ENCODE measurements at regions of chr13 and their contacts with region 1.

Region 1: DNA sequence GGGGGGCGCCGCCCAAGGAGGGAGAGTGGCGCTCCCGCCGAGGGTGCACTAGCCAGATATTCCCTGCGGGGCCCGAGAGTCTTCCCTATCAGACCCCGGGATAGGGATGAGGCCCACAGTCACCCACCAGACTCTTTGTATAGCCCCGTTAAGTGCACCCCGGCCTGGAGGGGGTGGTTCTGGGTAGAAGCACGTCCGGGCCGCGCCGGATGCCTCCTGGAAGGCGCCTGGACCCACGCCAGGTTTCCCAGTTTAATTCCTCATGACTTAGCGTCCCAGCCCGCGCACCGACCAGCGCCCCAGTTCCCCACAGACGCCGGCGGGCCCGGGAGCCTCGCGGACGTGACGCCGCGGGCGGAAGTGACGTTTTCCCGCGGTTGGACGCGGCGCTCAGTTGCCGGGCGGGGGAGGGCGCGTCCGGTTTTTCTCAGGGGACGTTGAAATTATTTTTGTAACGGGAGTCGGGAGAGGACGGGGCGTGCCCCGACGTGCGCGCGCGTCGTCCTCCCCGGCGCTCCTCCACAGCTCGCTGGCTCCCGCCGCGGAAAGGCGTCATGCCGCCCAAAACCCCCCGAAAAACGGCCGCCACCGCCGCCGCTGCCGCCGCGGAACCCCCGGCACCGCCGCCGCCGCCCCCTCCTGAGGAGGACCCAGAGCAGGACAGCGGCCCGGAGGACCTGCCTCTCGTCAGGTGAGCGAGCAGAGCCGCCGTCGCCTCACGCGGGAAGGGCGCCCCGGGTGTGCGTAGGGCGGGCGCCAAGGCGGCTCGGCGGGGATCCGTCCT is at the start of gene RB1:
- DNase-seq: peak; percentile 97
- ATAC-seq: peak; percentile 69
- H3K4me3 ChIP-seq: peak within 1 kb of the TSS; percentile 70 to 98 (median 89)
- H3K4me3 Mint-ChIP-seq: peak within 1 kb of the TSS; percentile 99
- H3K27ac ChIP-seq: peak within 1 kb of the TSS; percentile 99 to 100
- H3K27ac Mint-ChIP-seq: peak within 1 kb of the TSS; percentile 100
- H3K4me1 ChIP-seq: peaks cover 22 to 26% of the 10 kb centered on the region in 2 donors
- H3K4me1 Mint-ChIP-seq: peaks cover 34% of the 10 kb centered on the region
- H3K27me3 ChIP-seq: no peaks in the 10 kb centered on the region
- H3K27me3 Mint-ChIP-seq: no peaks in the 10 kb centered on the region
- CTCF ChIP-seq: no peak
- total RNA-seq, gene RB1: 70.4 and 74.8 TPM in 2 replicates

Region 2: DNA sequence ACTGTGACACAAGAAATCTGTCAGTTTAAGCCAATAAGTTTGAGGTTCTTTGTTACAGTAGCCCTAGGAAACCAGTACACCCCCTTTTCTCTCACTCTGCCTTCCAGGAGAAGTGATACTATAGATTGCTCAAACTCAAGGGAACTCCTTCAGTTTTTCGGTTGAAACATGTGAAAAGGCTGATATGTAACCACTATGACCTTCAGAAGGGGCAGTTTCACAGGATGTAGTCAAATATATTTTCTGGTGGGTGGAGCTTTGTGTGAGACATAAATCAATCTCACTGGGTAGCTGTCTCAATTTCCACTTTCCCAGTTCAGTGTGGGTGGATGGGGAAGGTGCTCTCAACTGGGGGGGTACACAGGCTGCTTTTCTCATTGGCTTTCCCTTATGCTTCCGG is 1448.4 kb before region 1 on chr13:
- CTCF ChIA-PET with region 1: no interaction called
- POLR2A ChIA-PET with region 1: no interaction called
- intact Hi-C with region 1: no loop called
- DNase-seq: no peak
- ATAC-seq: no peak
- H3K4me3 ChIP-seq: no peak overlapping the region
- H3K4me3 Mint-ChIP-seq: no peak overlapping the region
- H3K27ac ChIP-seq: no peak overlapping the region
- H3K27ac Mint-ChIP-seq: no peak overlapping the region
- H3K4me1 ChIP-seq: no peaks in the 10 kb centered on the region
- H3K4me1 Mint-ChIP-seq: no peaks in the 10 kb centered on the region
- H3K27me3 ChIP-seq: peaks cover 0 to 4% (median 0%) of the 10 kb centered on the region in 4 experiments
- H3K27me3 Mint-ChIP-seq: peaks cover 16% of the 10 kb centered on the region
- CTCF ChIP-seq: no peak

Region 3: DNA sequence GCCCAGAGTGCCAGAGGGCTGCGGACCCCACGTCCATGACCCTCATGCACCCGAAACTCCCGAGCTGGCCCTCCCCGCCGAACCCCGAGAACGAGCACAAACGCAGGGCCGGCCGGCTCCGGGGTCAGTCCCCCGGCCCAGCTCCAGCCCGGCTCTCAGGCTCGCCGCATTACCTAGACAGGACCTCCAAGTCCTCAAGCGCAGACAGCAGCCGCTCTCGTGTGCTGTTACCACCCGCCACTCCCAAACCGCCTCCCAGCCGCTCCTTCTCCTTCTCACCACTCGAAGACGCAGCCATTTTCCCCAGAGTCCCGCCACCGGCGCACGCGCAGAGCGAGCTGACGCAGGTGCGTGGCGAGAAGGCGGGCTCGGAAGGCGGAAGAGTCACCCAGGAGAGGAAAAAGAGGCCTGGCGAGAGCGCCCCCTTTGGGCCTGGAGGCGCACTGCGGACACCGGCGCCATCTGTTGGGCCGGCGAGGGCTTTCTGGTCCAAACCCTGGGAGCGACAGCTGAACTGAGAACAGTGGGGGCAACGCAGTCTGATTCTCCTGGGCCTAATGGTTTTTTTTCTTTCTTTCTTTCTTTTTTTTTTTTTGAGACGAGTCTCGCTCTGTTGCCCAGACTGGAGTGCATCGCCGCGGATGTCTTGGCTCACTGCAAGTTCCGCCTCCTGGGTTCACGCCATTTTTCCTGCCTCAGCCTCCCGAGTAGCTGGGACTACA is 208.6 kb before region 1 on chr13 and contains the start of gene MED4:
- CTCF ChIA-PET with region 1: no interaction called
- POLR2A ChIA-PET with region 1: interaction called, 4 read pairs
- intact Hi-C with region 1: loop called (anchors 1 kb)
- DNase-seq: peak; percentile 97
- ATAC-seq: peak; percentile 99
- H3K4me3 ChIP-seq: peak within 1 kb of the TSS; percentile 86 to 99 (median 92)
- H3K4me3 Mint-ChIP-seq: peak within 1 kb of the TSS; percentile 94
- H3K27ac ChIP-seq: peak within 1 kb of the TSS; percentile 83 to 89
- H3K27ac Mint-ChIP-seq: peak within 1 kb of the TSS; percentile 95
- H3K4me1 ChIP-seq: peaks cover 16 to 17% of the 10 kb centered on the region in 2 donors
- H3K4me1 Mint-ChIP-seq: peaks cover 35% of the 10 kb centered on the region
- H3K27me3 ChIP-seq: no peaks in the 10 kb centered on the region
- H3K27me3 Mint-ChIP-seq: peaks cover 10% of the 10 kb centered on the region
- CTCF ChIP-seq: peak; percentile 99
- total RNA-seq, gene MED4: 49.7 and 50.1 TPM in 2 replicates

Region 4: DNA sequence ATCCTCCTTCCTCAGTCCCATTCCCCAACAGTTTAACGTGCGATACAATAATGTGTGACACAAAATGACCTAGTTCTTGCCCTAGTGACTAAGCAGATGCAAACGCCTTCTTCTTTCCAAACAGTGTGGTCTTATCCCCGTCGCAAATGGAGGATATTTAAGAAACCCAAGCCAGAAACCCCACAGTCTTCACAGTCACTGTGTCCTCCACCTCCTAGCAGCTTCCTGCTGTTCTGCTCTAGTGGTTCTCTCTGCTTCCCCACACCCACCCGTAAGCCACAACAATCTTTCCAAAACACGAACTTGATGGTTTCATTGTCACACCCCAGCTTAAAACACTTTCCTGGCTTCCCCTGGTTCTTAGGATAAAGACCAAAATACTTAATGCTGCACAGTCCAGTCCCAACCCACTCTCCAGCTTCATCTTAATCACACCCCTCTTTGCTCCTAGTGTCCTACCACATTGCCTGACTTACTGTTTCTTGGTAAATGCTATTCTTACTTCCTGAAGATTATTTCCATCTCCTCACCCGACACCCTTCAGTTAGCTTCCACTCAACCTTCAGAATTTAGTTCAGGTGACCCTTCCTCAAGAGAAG is 38.2 kb before region 1 on chr13:
- CTCF ChIA-PET with region 1: interaction called, 3 read pairs
- POLR2A ChIA-PET with region 1: interaction called, 11 read pairs
- intact Hi-C with region 1: loop called (anchors 1 kb)
- DNase-seq: peak; percentile 73
- ATAC-seq: peak; percentile 91
- H3K4me3 ChIP-seq: peak overlapping the region in 3 of 5 experiments; percentile 29 to 53 (median 31)
- H3K4me3 Mint-ChIP-seq: peak overlapping the region; percentile 86
- H3K27ac ChIP-seq: peak overlapping the region; percentile 67 to 80
- H3K27ac Mint-ChIP-seq: peak overlapping the region; percentile 92
- H3K4me1 ChIP-seq: peaks cover 44 to 47% of the 10 kb centered on the region in 2 donors
- H3K4me1 Mint-ChIP-seq: peaks cover 51% of the 10 kb centered on the region
- H3K27me3 ChIP-seq: no peaks in the 10 kb centered on the region
- H3K27me3 Mint-ChIP-seq: no peaks in the 10 kb centered on the region
- CTCF ChIP-seq: no peak

Region 5: DNA sequence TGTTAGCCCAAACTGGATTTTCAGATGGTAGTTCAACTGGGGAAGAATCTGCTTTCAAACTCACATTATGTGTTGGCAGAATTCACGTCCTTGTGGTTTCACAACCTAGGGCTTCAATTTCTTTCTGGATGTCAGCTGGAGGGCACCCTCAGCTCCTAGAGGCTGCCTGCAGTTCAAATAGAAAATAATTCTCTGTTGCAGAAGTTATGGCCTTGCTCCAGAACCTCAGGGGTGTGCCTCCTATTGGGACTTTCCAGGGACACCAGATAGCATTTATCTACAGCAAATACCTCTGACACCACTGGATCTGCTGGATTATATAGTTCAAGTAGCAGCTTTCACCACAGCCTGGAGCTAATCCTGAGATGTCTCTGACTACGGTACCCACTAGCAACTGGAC is 11.8 kb before region 1 on chr13:
- CTCF ChIA-PET with region 1: interaction called, 5 read pairs
- POLR2A ChIA-PET with region 1: interaction called, 5 read pairs
- intact Hi-C with region 1: loop called (anchors 1 kb)
- DNase-seq: no peak
- ATAC-seq: no peak
- H3K4me3 ChIP-seq: no peak overlapping the region
- H3K4me3 Mint-ChIP-seq: no peak overlapping the region
- H3K27ac ChIP-seq: no peak overlapping the region
- H3K27ac Mint-ChIP-seq: no peak overlapping the region
- H3K4me1 ChIP-seq: peaks cover 14% of the 10 kb centered on the region in 2 donors
- H3K4me1 Mint-ChIP-seq: peaks cover 19% of the 10 kb centered on the region
- H3K27me3 ChIP-seq: no peaks in the 10 kb centered on the region
- H3K27me3 Mint-ChIP-seq: peaks cover 5% of the 10 kb centered on the region
- CTCF ChIP-seq: no peak

Region 6: GRCh38 chr13:48318821-48319511 is 15.4 kb after region 1 on chr13:
- CTCF ChIA-PET with region 1: no interaction called
- POLR2A ChIA-PET with region 1: interaction called, 3 read pairs
- intact Hi-C with region 1: loop called (anchors 2 kb)
- DNase-seq: peak; percentile 48
- ATAC-seq: peak; percentile 19
- H3K4me3 ChIP-seq: peak overlapping the region in 4 of 5 experiments; percentile 25 to 47 (median 38)
- H3K4me3 Mint-ChIP-seq: peak overlapping the region; percentile 81
- H3K27ac ChIP-seq: no peak overlapping the region
- H3K27ac Mint-ChIP-seq: peak overlapping the region; percentile 2
- H3K4me1 ChIP-seq: peaks cover 3 to 35% of the 10 kb centered on the region in 2 donors
- H3K4me1 Mint-ChIP-seq: peaks cover 44% of the 10 kb centered on the region
- H3K27me3 ChIP-seq: no peaks in the 10 kb centered on the region
- H3K27me3 Mint-ChIP-seq: no peaks in the 10 kb centered on the region
- CTCF ChIP-seq: no peak

Region 7: DNA sequence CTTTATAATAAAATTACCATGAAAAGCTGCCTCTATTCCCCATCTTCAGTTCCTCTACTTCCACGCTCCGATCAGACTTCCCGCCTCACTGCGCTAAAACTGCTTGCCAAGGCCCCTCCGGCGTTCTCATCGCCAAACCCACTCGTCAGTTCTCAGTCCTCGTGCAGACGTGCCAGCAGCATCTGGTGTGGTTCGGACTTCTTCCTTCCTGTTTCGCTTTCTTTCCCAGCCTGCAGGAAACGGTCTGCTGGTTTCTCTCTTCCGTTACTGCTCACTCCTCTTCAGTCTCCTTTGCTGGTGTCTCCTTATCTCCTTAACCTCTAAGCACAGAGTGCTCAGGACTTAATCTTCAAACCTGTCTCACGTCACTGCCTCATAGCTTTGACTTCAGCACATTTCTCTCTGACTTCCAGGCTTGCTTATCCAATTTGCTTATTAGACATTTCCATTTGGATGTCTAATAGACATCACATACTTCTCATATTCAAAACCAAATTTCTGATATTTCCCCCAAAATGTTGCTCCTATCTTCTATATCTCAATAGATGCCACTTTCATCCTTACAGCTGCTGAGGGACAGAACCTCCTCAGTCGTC is 189.0 kb after region 1 on chr13:
- CTCF ChIA-PET with region 1: no interaction called
- POLR2A ChIA-PET with region 1: no interaction called
- intact Hi-C with region 1: loop called (anchors 1 kb)
- DNase-seq: peak; percentile 91
- ATAC-seq: peak; percentile 86
- H3K4me3 ChIP-seq: peak overlapping the region; percentile 10 to 65 (median 32)
- H3K4me3 Mint-ChIP-seq: no peak overlapping the region
- H3K27ac ChIP-seq: peak overlapping the region; percentile 63 to 66
- H3K27ac Mint-ChIP-seq: no peak overlapping the region
- H3K4me1 ChIP-seq: peaks cover 57% of the 10 kb centered on the region in 2 donors
- H3K4me1 Mint-ChIP-seq: peaks cover 38% of the 10 kb centered on the region
- H3K27me3 ChIP-seq: no peaks in the 10 kb centered on the region
- H3K27me3 Mint-ChIP-seq: no peaks in the 10 kb centered on the region
- CTCF ChIP-seq: no peak

Region 8: GRCh38 chr13:48532506-48533499 is 229.3 kb after region 1 on chr13 and contains the start of gene RCBTB2:
- CTCF ChIA-PET with region 1: no interaction called
- POLR2A ChIA-PET with region 1: interaction called, 4 read pairs
- intact Hi-C with region 1: loop called (anchors 1 kb)
- DNase-seq: peak; percentile 98
- ATAC-seq: peak; percentile 89
- H3K4me3 ChIP-seq: peak within 1 kb of the TSS; percentile 54 to 92 (median 82)
- H3K4me3 Mint-ChIP-seq: peak within 1 kb of the TSS; percentile 97
- H3K27ac ChIP-seq: peak within 1 kb of the TSS; percentile 63 to 85
- H3K27ac Mint-ChIP-seq: peak within 1 kb of the TSS; percentile 98
- H3K4me1 ChIP-seq: peaks cover 20 to 24% of the 10 kb centered on the region in 2 donors
- H3K4me1 Mint-ChIP-seq: peaks cover 26% of the 10 kb centered on the region
- H3K27me3 ChIP-seq: peaks cover 0 to 15% (median 11%) of the 10 kb centered on the region in 4 experiments
- H3K27me3 Mint-ChIP-seq: peaks cover 22% of the 10 kb centered on the region
- CTCF ChIP-seq: no peak
- total RNA-seq, gene RCBTB2: 2.7 and 3.7 TPM in 2 replicates

Region 9: DNA sequence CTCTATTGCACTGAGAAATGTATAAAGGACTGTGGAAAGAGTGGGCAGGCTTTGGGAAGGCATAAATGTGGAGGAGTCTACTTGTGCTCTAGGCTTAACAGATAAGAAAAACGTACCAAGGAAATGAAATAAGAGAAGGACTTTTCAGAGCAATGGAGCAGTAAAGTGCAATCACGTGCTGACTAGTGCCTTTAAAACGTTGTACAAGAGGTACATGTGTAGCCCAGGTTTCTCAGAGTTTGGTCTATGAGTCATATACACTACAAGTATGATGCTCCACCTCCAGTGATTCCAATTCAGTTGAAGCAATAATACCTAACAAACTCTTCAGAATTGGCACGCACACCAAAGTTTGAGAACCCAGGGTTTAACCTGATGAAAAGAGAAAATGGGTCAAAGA is 658.7 kb after region 1 on chr13:
- CTCF ChIA-PET with region 1: no interaction called
- POLR2A ChIA-PET with region 1: no interaction called
- intact Hi-C with region 1: no loop called
- DNase-seq: no peak
- ATAC-seq: no peak
- H3K4me3 ChIP-seq: no peak overlapping the region
- H3K4me3 Mint-ChIP-seq: no peak overlapping the region
- H3K27ac ChIP-seq: no peak overlapping the region
- H3K27ac Mint-ChIP-seq: no peak overlapping the region
- H3K4me1 ChIP-seq: no peaks in the 10 kb centered on the region
- H3K4me1 Mint-ChIP-seq: peaks cover 3% of the 10 kb centered on the region
- H3K27me3 ChIP-seq: no peaks in the 10 kb centered on the region
- H3K27me3 Mint-ChIP-seq: peaks cover 4% of the 10 kb centered on the region
- CTCF ChIP-seq: no peak